ENCODE measurements at regions of chr3 and their contacts with region 1.

Region 1: GRCh38 chr3:37855363-37855970 is 6.2 kb upstream of the CTDSPL start:
- DNase-seq: peak; percentile 57
- H3K4me3 ChIP-seq: no peak overlapping the region
- H3K27ac ChIP-seq: no peak overlapping the region
- H3K4me1 ChIP-seq: peaks cover 4% of the 10 kb centered on the region
- H3K27me3 ChIP-seq: no peaks in the 10 kb centered on the region
- CTCF ChIP-seq: peak; percentile 73

Region 2: GRCh38 chr3:37967260-37967881 is 111.9 kb after region 1 on chr3:
- CTCF ChIA-PET with region 1: interaction called, 14 read pairs
- POLR2A ChIA-PET with region 1: no interaction called
- intact Hi-C with region 1: loop called (anchors 1 kb)
- DNase-seq: peak; percentile 63
- H3K4me3 ChIP-seq: no peak overlapping the region
- H3K27ac ChIP-seq: no peak overlapping the region
- H3K4me1 ChIP-seq: peaks cover 13% of the 10 kb centered on the region
- H3K27me3 ChIP-seq: no peaks in the 10 kb centered on the region
- CTCF ChIP-seq: peak; percentile 72

Region 3: DNA sequence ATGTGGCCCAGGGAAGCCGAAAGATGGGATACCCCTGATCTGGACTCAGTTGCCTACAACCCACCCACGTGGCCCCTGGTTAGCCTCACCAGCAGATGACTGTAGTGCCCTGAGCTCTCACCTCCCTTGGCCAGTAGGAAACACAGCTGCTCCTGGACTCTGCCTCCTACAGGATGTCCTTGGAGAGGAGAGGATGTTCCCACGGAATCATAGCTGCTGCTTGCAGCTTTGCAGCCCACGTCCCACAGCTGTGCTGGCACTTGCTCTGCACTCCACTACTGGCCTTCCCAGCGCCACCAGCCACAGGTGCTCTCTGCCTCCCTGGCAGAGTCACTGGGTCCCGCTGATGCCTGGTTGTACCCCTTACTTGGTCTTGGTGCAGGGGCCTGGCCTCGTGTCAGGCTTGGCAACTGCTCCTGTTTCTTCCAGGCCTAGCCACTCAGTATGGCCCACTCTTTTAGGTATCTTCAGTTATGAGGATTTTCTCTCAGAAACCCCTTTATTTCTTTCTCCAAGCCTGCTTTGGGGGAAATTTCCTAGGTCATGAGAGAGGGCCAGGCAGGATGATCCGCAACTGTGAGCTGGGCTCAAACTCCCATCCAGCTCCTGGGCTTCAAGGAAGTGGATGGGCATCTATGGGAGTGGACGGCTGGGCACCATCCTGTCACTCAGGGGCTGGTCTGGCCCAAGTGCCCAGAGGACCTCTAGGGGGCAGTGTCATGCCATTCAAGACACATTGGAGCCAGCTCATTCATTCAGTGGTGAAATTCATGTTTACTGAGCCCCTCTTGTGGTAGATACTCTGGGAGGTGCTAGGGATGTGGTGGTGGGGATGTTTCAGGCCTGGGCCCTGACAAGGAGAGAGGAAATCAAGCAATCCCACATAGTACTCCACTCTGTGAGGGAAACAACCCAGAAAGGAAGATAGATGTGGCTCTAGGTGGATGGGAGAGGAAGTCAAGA is 118.9 kb after region 1 on chr3:
- CTCF ChIA-PET with region 1: interaction called, 4 read pairs
- POLR2A ChIA-PET with region 1: no interaction called
- intact Hi-C with region 1: loop called (anchors 1 kb)
- DNase-seq: peak; percentile 43
- H3K4me3 ChIP-seq: no peak overlapping the region
- H3K27ac ChIP-seq: no peak overlapping the region
- H3K4me1 ChIP-seq: no peaks in the 10 kb centered on the region
- H3K27me3 ChIP-seq: no peaks in the 10 kb centered on the region
- CTCF ChIP-seq: peak; percentile 67